ENCODE measurements at regions of chr10 and their contacts with region 1.

Region 1: DNA sequence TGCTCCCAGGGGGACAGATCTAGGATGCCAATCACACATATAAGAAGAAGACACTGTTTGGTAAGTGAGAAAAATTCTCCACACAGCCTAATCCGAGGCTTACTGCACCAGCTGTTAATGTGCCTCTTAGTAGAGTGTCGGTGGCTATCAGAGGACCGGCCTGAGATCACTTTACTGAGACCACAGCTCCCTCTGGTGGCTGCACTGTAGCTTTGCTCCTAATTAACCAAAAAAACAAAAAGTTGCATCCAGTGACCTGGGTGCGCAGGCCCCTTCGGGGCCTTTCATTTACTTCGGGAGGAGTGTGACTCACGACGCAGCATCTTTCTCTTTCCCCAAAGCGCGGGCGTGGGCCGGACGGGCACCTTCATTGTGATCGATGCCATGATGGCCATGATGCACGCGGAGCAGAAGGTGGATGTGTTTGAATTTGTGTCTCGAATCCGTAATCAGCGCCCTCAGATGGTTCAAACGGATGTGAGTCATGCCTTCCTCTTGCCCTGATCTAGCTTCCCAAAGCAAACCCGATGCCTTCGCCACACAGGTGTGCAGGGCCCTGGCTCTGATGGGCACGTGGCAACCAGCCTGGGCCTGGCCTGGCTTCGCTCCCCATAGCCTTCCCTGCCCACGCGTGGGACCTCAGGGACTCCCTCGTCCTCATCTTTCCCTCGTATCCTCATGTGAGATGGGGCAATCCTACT is 56.7 kb downstream of the MKI67 start:
- DNase-seq: peak; percentile 40 to 91 (median 80)

Region 2: GRCh38 chr10:127906548-127907377 is 162.7 kb before region 1 on chr10 and contains the start of gene PTPRE:
- intact Hi-C with region 1: loop called (anchors 2 kb)
- DNase-seq: peak in 40 of 42 donors; percentile 47 to 86 (median 71)

Region 3: GRCh38 chr10:128035557-128035973 is 33.9 kb before region 1 on chr10:
- intact Hi-C with region 1: loop called (anchors 2 kb)
- DNase-seq: peak in 30 of 42 donors; percentile 10 to 80 (median 48)

Region 4: DNA sequence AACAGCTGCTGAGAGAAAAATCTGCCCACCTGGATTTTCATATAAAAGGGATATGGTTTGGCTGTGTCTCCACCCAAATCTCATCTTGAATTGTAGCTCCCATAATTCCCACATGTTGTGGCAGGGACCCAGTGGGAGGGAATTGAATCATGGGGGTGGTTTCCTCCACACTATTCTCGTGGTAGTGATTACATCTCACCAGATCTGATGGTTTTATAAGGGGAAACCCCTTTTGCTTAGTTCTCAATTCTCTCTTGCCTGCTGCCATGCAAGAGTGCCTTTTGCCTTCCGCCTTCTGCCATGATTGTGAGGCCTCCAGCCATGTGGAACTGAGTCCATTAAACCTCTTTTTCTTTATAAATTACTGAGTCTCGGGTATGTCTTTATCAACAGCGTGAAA is 77.6 kb after region 1 on chr10:
- intact Hi-C with region 1: loop called (anchors 10 kb)
- DNase-seq: peak in 1 of 42 donors; percentile 17

Region 5: GRCh38 chr10:128908099-128908498 is 838.6 kb after region 1 on chr10:
- intact Hi-C with region 1: no loop called
- DNase-seq: peak in 2 of 42 donors; percentile 34 to 37

Measured in head of caudate nucleus (tissue), 42 donors.